ENCODE measurements at regions of chr3 and their contacts with region 1.

Region 1: GRCh38 chr3:190959077-190959476 is 96.6 kb upstream of the GMNC start:
- DNase-seq: no peak
- ATAC-seq: no peak
- H3K4me3 ChIP-seq: no peak overlapping the region
- H3K4me3 Mint-ChIP-seq: no peak overlapping the region
- H3K27ac ChIP-seq: no peak overlapping the region
- H3K27ac Mint-ChIP-seq: no peak overlapping the region
- H3K4me1 ChIP-seq: no peaks in the 10 kb centered on the region
- H3K4me1 Mint-ChIP-seq: no peaks in the 10 kb centered on the region
- H3K27me3 ChIP-seq: no peaks in the 10 kb centered on the region
- H3K27me3 Mint-ChIP-seq: no peaks in the 10 kb centered on the region

Region 2: DNA sequence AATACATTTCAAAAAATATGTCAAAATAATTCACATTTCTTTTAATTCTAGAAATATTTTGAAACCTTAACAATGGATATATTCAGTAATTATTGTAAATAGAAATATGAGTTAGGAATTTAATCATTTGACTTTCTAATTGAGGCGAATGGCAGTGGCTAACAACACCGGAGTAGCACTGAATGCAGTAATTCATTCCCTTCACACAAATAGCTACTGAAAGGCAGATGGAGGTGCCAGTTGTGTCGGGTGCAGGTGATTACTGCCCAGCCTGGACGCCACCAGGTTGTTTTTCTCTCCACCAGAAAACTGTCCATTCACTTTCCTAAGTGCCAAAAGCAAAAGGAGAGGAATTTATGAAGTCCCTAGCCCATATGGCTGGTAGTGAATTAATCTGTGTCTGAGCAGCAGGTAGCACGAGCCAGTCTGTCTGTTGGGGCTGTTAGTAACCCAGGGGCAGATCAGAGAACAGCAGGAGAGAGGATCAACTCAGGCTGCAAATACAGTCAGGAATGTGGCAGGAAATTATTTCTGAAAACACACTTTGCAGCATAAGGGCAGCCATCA is 17.3 kb before region 1 on chr3:
- CTCF ChIA-PET with region 1: no interaction called
- POLR2A ChIA-PET with region 1: interaction called in 1 of 2 experiments, 10 read pairs
- DNase-seq: no peak
- ATAC-seq: no peak
- H3K4me3 ChIP-seq: no peak overlapping the region
- H3K4me3 Mint-ChIP-seq: no peak overlapping the region
- H3K27ac ChIP-seq: no peak overlapping the region
- H3K27ac Mint-ChIP-seq: no peak overlapping the region
- H3K4me1 ChIP-seq: no peaks in the 10 kb centered on the region
- H3K4me1 Mint-ChIP-seq: no peaks in the 10 kb centered on the region
- H3K27me3 ChIP-seq: no peaks in the 10 kb centered on the region
- H3K27me3 Mint-ChIP-seq: no peaks in the 10 kb centered on the region

Region 3: DNA sequence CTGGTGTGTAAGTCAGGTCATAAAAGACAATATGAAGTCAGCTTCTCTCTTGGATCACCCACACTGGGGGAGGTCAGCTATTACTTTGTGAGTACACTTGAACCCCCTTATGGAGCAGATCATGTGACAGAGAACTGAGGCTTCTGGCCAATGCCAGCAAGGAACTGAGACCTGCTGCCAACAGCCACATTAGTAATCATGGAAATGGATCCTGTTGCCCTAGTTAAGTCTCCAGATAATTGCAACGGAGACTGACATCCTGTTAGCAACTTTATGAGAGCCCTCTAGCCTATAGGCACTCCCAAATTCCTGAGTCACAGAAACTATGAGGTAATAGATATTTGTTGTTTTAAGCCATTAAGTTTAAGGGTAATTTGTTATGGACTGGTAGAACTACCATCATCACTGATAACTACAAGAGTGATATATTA is 13.8 kb after region 1 on chr3:
- CTCF ChIA-PET with region 1: no interaction called
- POLR2A ChIA-PET with region 1: no interaction called
- DNase-seq: no peak
- ATAC-seq: no peak
- H3K4me3 ChIP-seq: no peak overlapping the region
- H3K4me3 Mint-ChIP-seq: no peak overlapping the region
- H3K27ac ChIP-seq: no peak overlapping the region
- H3K27ac Mint-ChIP-seq: no peak overlapping the region
- H3K4me1 ChIP-seq: no peaks in the 10 kb centered on the region
- H3K4me1 Mint-ChIP-seq: no peaks in the 10 kb centered on the region
- H3K27me3 ChIP-seq: no peaks in the 10 kb centered on the region
- H3K27me3 Mint-ChIP-seq: no peaks in the 10 kb centered on the region